ENCODE measurements at regions of chr17 and their contacts with region 1.

Region 1: DNA sequence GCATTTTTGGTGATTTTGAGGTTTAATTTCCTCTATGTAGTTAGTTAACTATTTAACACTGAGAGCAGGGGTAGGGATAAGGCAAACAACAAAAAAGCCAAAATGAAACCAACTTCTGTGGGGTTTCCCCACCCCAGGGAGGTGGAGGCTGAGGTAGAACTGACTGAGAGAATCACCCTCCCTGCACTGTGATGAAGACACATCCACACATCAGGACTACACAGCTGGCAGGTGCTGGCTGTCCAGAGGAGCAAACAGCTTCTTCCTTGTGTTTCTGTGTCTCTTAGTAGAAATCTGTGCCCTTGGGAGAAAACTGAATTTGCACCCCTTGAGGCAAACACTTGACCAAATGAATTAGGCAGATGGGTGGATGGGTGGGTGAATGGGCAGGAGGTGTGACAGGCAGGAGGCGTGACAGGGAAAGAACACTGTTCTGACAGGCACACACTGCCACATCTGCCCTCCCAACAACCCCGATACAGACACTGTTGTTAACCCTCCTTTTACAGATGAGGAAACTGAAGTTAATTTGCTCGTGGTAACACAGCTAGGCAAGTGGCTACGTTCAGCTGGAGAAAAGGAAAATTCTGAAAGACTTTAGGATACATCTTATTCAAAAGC is 62.9 kb upstream of the AMZ2 start:
- DNase-seq: peak; percentile 78
- H3K4me3 Mint-ChIP-seq: peak overlapping the region; percentile 40
- H3K27ac Mint-ChIP-seq: peak overlapping the region; percentile 68
- H3K4me1 Mint-ChIP-seq: peaks cover 48% of the 10 kb centered on the region
- H3K27me3 Mint-ChIP-seq: no peaks in the 10 kb centered on the region

Region 2: DNA sequence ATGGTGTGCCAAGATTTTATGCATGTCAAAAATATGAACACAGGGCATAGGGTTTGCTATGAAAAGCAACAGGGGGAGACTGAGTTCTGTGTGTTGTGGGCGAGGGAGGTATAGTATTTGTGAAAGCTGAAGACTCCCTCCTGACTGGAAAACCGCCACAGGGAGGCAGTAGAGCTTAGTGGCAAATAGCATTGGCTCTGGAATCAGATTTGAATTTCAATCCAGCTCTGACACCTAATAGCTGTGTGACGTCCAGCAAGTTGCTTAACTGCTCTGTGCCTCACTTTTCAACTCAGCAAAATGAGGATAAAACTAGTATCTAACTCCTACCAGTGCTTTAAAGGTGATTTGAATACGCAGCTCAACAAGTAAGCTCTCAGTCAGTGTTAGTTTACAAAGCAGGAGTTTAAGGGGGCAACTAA is 127.4 kb before region 1 on chr17:
- CTCF ChIA-PET with region 1: no interaction called
- intact Hi-C with region 1: loop called (anchors 5 kb)
- DNase-seq: peak; percentile 69
- H3K4me3 Mint-ChIP-seq: no peak overlapping the region
- H3K27ac Mint-ChIP-seq: no peak overlapping the region
- H3K4me1 Mint-ChIP-seq: peaks cover 16% of the 10 kb centered on the region
- H3K27me3 Mint-ChIP-seq: peaks cover 2% of the 10 kb centered on the region

Region 3: GRCh38 chr17:68196944-68197595 is 12.1 kb after region 1 on chr17:
- CTCF ChIA-PET with region 1: interaction called, 58 read pairs
- intact Hi-C with region 1: loop called (anchors 1 kb)
- DNase-seq: no peak
- H3K4me3 Mint-ChIP-seq: peak overlapping the region; percentile 65
- H3K27ac Mint-ChIP-seq: no peak overlapping the region
- H3K4me1 Mint-ChIP-seq: peaks cover 25% of the 10 kb centered on the region
- H3K27me3 Mint-ChIP-seq: peaks cover 32% of the 10 kb centered on the region

Region 4: GRCh38 chr17:68356520-68356919 is 171.6 kb after region 1 on chr17:
- CTCF ChIA-PET with region 1: no interaction called
- intact Hi-C with region 1: loop called (anchors 5 kb)
- DNase-seq: peak; percentile 85
- H3K4me3 Mint-ChIP-seq: no peak overlapping the region
- H3K27ac Mint-ChIP-seq: peak overlapping the region; percentile 46
- H3K4me1 Mint-ChIP-seq: peaks cover 49% of the 10 kb centered on the region
- H3K27me3 Mint-ChIP-seq: no peaks in the 10 kb centered on the region

Measured in activated naive CD4-positive, alpha-beta T cell treated with anti-CD3 and anti-CD28 coated beads for 36 hours (primary cell).